ENCODE measurements at regions of chr21 and their contacts with region 1.

Region 1: GRCh38 chr21:35198031-35198431 is 148.9 kb upstream of the RUNX1 start:
- DNase-seq: no peak
- H3K4me3 Mint-ChIP-seq: no peak overlapping the region
- H3K27ac Mint-ChIP-seq: peak overlapping the region; percentile 25
- H3K4me1 Mint-ChIP-seq: peaks cover 26% of the 10 kb centered on the region
- H3K27me3 Mint-ChIP-seq: no peaks in the 10 kb centered on the region

Region 2: GRCh38 chr21:35150562-35151226 is 47.3 kb before region 1 on chr21:
- intact Hi-C with region 1: loop called (anchors 5 kb)
- DNase-seq: no peak
- H3K4me3 Mint-ChIP-seq: peak overlapping the region; percentile 48
- H3K27ac Mint-ChIP-seq: peak overlapping the region; percentile 92
- H3K4me1 Mint-ChIP-seq: peaks cover 33% of the 10 kb centered on the region
- H3K27me3 Mint-ChIP-seq: no peaks in the 10 kb centered on the region

Region 3: DNA sequence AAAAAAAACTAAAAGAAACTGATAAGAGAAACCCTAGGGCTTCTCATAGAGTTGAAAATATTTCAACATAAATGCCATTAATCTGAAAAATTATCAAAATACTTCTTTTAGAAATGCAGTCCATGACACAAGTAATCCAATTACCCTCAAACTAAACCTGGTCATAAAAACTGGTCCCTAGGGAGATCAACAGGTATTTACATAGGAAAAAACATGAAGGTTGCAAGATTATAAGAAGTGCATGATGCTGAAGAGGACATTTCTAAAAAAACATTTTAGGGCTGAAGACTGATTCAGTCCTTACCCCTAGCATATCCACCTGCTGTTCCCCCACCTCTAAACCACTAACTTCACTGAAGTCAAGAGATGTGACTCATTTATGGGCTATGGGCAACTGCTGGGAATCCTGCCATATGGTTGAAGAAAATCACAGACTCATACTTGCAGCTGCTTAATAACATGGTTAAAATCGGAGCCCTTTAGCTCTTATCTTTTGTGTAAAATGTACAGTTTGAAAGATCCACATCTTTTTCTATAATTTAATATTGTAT is 18.0 kb before region 1 on chr21:
- intact Hi-C with region 1: loop called (anchors 2 kb)
- DNase-seq: no peak
- H3K4me3 Mint-ChIP-seq: no peak overlapping the region
- H3K27ac Mint-ChIP-seq: no peak overlapping the region
- H3K4me1 Mint-ChIP-seq: peaks cover 6% of the 10 kb centered on the region
- H3K27me3 Mint-ChIP-seq: peaks cover 4% of the 10 kb centered on the region

Region 4: GRCh38 chr21:35438643-35439404 is 240.8 kb after region 1 on chr21:
- intact Hi-C with region 1: no loop called
- DNase-seq: peak; percentile 70
- H3K4me3 Mint-ChIP-seq: peak overlapping the region; percentile 25
- H3K27ac Mint-ChIP-seq: no peak overlapping the region
- H3K4me1 Mint-ChIP-seq: peaks cover 12% of the 10 kb centered on the region
- H3K27me3 Mint-ChIP-seq: peaks cover 20% of the 10 kb centered on the region